HEK293T (cell line): ENCODE measurements at regions of chr1 and their contacts with region 1.

Region 1: GRCh38 chr1:54488779-54489626 is 59.0 kb upstream of the ACOT11 start:
- DNase-seq: peak; percentile 98

Region 2: GRCh38 chr1:54406339-54407153 is 82.5 kb before region 1 on chr1 and contains the start of gene SSBP3:
- CTCF ChIA-PET with region 1: interaction called, 13 read pairs
- POLR2A ChIA-PET with region 1: interaction called, 59 read pairs
- DNase-seq: peak; percentile 100

Region 3: GRCh38 chr1:54439550-54440223 is 49.3 kb before region 1 on chr1:
- CTCF ChIA-PET with region 1: no interaction called
- POLR2A ChIA-PET with region 1: no interaction called
- DNase-seq: no peak